Lower leg skin (tissue), 4 donors: ENCODE measurements at regions of chr12 and their contacts with region 1.

Region 1: DNA sequence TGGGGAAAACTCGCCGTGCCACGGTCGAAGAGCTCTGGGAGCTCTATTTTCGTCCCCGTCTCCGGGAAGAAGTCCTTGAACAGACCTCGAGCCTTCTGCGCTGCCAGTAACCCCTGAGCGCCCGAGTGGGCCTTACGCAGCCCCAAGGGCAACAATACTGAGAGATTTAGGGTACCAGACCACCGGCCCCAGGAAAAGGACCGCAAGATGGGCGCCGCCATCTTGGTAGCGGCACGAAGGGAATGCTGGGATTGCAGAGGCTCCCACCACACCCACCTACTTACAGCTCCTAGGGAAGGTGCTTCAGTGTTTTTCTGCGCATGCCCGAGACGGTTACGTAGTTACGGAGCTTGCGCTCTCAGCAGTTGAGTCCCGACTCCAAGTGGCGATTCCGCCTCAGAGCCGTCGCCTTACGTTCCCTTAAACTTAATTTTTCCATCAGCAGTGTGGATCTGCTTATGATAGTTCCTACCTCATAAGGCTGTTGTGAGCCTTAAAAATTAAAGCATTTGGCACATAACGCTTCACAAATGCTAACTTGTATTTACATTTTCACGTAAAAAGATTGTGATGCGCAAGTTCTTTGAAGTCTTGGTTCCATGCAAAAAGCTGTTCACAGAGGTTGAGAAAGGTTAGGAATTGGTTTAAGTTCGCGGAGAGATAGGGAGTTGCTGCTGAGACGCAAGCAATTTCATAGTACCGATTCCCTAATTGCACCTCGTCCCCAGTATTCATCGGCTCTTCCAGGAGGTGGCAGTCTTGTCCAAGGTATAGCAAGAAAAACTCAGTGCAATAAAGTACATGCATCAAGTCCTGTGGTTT is at the start of gene YARS2:
- DNase-seq: peak; percentile 95 to 98
- H3K4me3 ChIP-seq: peak within 1 kb of the TSS; percentile 93
- CTCF ChIP-seq: peak in 1 of 3 donors; percentile 44
- POLR2A ChIP-seq: peak in 1 of 2 donors; percentile 9
- total RNA-seq, gene YARS2: 16.9 to 35.7 (median 19.8) TPM

Region 2: DNA sequence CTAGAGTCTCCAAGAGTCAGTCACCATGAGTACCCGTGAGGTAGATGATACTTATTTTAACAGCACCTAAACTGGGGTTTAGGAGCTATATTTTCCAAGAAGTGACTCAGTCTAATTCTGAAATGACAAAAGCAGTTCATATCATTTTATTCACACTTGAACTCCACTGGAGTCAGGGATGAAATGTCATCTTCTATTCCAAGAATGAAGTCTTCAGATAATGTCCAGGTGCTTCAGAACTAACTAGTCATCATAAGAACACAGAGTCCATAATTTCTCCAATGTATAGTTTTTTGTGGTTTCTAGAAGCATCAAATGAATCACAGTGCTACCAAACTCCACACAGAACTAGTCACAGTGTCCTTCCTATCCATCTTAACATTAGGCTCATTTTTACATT is 63.5 kb before region 1 on chr12:
- intact Hi-C with region 1: no loop called
- DNase-seq: no peak
- H3K4me3 ChIP-seq: no peak overlapping the region
- CTCF ChIP-seq: no peak
- POLR2A ChIP-seq: no peak

Region 3: GRCh38 chr12:32917094-32917611 is 161.3 kb after region 1 on chr12:
- intact Hi-C with region 1: no loop called
- DNase-seq: peak in 1 of 2 donors; percentile 28
- H3K4me3 ChIP-seq: no peak overlapping the region
- CTCF ChIP-seq: no peak
- POLR2A ChIP-seq: no peak

Region 4: GRCh38 chr12:34022079-34022830 is 1266.4 kb after region 1 on chr12 and contains the start of gene ALG10:
- intact Hi-C with region 1: loop called (anchors 5 kb)
- DNase-seq: peak; percentile 98 to 99
- H3K4me3 ChIP-seq: peak within 1 kb of the TSS; percentile 70
- CTCF ChIP-seq: no peak
- POLR2A ChIP-seq: no peak
- total RNA-seq, gene ALG10: 4.0 to 6.5 (median 4.8) TPM